Activated CD8-positive, alpha-beta T cell treated with anti-CD3 and anti-CD28 coated beads, Interleukin-2, amount 10 ng/mL, durations not matched to agents 7 days and 5 days (primary cell): ENCODE measurements at regions of chr22 and their contacts with region 1.

Region 1: DNA sequence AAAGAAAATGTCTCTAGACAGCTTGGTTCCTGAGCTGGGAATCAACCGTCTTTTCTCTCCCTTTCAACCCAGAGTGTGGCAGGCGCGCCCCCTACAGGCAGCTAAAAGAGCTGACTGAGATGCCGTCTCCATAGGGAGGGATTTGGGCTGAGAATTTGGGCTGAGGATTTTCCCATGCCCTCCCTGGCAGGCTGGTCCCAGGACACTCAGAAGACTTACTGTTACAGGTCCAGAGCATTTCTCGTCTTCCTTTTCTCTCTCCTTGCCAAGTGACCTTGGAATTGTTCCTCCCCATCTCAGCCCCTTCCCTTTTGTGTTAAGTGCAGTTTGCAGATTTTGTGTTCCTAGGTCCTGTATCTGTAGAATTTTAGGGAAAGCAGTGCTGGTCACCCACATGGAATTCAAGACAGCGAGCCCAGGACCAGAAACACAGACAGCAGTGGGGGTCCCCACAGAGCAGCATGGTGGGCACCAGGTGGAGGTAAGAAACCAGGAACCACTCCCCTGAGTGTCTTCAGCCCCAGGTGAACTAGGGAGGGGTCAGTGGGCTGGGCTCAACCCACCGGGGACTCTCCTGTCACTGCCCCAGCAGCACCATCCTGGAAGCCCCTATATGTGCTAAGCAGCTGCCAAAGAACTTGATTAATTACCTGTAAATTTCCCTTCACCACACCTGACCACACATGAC is 9.9 kb upstream of the IGLL5 start:
- DNase-seq: peak; percentile 82
- ATAC-seq: peak; percentile 60
- H3K4me3 Mint-ChIP-seq: no peak overlapping the region
- H3K27ac Mint-ChIP-seq: no peak overlapping the region
- H3K4me1 Mint-ChIP-seq: no peaks in the 10 kb centered on the region
- H3K27me3 Mint-ChIP-seq: peaks cover 21% of the 10 kb centered on the region

Region 2: GRCh38 chr22:22700631-22701030 is 177.0 kb before region 1 on chr22:
- CTCF ChIA-PET with region 1: no interaction called
- POLR2A ChIA-PET with region 1: no interaction called
- DNase-seq: no peak
- ATAC-seq: no peak
- H3K4me3 Mint-ChIP-seq: no peak overlapping the region
- H3K27ac Mint-ChIP-seq: no peak overlapping the region
- H3K4me1 Mint-ChIP-seq: peaks cover 9% of the 10 kb centered on the region
- H3K27me3 Mint-ChIP-seq: peaks cover 4% of the 10 kb centered on the region

Region 3: GRCh38 chr22:22855617-22856308 is 21.9 kb before region 1 on chr22:
- CTCF ChIA-PET with region 1: interaction called, 77 read pairs
- POLR2A ChIA-PET with region 1: no interaction called
- DNase-seq: peak; percentile 56
- ATAC-seq: peak; percentile 83
- H3K4me3 Mint-ChIP-seq: no peak overlapping the region
- H3K27ac Mint-ChIP-seq: no peak overlapping the region
- H3K4me1 Mint-ChIP-seq: no peaks in the 10 kb centered on the region
- H3K27me3 Mint-ChIP-seq: peaks cover 40% of the 10 kb centered on the region

Region 4: DNA sequence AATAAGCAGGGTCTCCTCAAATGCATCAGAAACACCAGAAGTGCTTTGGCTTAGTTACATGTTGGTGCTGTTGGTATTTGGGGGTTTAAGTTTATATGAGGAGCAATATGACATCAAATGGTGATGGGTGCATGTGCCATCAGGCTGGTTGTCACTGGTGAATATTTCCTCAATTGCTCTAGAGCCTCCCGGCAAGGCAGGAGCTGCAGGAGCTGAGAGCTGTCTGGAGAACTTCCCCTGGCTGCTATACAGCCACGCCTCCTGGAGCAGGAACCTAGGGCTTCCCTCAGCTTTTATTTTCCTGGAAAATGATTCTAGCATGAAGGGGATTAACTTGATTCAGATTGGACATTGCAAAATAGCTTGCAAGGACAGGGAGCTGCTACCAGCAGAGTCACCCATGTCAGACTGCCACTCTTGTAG is 25.7 kb after region 1 on chr22:
- CTCF ChIA-PET with region 1: no interaction called
- POLR2A ChIA-PET with region 1: no interaction called
- DNase-seq: no peak
- ATAC-seq: no peak
- H3K4me3 Mint-ChIP-seq: no peak overlapping the region
- H3K27ac Mint-ChIP-seq: no peak overlapping the region
- H3K4me1 Mint-ChIP-seq: no peaks in the 10 kb centered on the region
- H3K27me3 Mint-ChIP-seq: peaks cover 8% of the 10 kb centered on the region